ENCODE measurements at regions of chr9 and their contacts with region 1.

Region 1: DNA sequence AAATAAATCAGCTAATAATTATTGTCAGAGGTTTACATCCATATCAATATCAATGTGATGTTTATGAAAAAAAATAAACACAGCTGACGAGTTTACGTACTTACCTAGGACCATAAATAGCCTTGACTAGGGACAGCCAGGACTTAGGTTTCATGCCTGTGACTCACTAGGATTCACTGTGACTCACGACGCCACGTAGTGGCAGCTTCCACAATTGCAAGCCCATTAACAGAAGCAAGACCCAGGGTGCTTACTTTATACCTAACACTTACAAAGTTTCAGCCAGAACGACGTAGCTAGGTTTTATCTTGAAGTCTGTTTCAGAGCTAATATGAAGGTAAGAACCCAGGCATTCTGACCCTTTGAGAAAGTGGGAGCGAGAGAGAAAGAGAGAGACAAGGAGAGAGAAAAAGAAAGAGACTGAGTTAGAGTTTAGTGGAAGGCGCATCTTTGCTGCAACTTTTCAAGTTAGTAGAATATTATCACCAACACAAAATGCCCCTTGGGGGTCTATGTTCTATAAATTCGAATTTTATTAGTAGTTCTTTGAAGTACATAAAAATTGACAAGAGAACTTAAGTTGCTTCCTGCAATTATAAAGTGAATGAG is 191.2 kb downstream of the GNA14 start:
- DNase-seq: peak; percentile 78 to 82 (median 80)
- ATAC-seq: peak; percentile 92 to 96 (median 94)
- H3K4me3 ChIP-seq: no peak overlapping the region
- H3K27ac ChIP-seq: no peak overlapping the region
- H3K4me1 ChIP-seq: no peaks in the 10 kb centered on the region
- H3K27me3 ChIP-seq: no peaks in the 10 kb centered on the region
- CTCF ChIP-seq: peak; percentile 80 to 97 (median 92)
- POLR2A ChIP-seq: no peak

Region 2: GRCh38 chr9:77562019-77562748 is 105.3 kb after region 1 on chr9:
- intact Hi-C with region 1: no loop called
- DNase-seq: no peak
- ATAC-seq: no peak
- H3K4me3 ChIP-seq: no peak overlapping the region
- H3K27ac ChIP-seq: no peak overlapping the region
- H3K4me1 ChIP-seq: no peaks in the 10 kb centered on the region
- H3K27me3 ChIP-seq: no peaks in the 10 kb centered on the region
- CTCF ChIP-seq: no peak
- POLR2A ChIP-seq: no peak

Region 3: GRCh38 chr9:77648234-77649120 is 191.5 kb after region 1 on chr9 and contains the start of gene GNA14:
- intact Hi-C with region 1: loop called in 1 of 2 experiments (anchors 10 kb)
- DNase-seq: peak; percentile 76 to 85 (median 80)
- ATAC-seq: peak; percentile 81 to 88 (median 83)
- H3K4me3 ChIP-seq: peak within 1 kb of the TSS; percentile 51 to 61 (median 51)
- H3K27ac ChIP-seq: peak within 1 kb of the TSS; percentile 41 to 55 (median 43)
- H3K4me1 ChIP-seq: peaks cover 0 to 13% (median 2%) of the 10 kb centered on the region in 4 donors
- H3K27me3 ChIP-seq: no peaks in the 10 kb centered on the region
- CTCF ChIP-seq: no peak
- POLR2A ChIP-seq: no peak
- total RNA-seq, gene GNA14: 2.3 to 4.2 (median 3.8) TPM

Region 4: DNA sequence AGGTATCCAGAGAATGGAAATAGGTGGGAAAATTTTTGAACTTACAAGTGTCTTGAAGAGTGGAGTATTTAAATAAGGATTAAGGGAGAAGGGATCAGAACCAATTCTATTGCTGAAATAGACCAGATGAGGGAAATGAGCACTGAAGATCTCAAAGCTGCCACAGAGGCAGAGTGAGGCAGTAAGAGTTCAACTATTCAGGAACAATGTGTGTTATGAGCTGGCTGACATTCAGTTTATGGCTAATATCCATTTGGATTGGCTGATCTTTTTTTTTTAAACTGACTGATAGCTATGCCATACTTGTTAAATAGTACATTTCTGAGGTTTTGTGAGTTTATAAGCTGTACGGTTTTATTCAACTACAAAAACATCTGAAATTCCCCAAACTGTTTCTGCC is 286.5 kb after region 1 on chr9:
- intact Hi-C with region 1: loop called in 1 of 2 experiments (anchors 10 kb)
- DNase-seq: no peak
- ATAC-seq: no peak
- H3K4me3 ChIP-seq: no peak overlapping the region
- H3K27ac ChIP-seq: no peak overlapping the region
- H3K4me1 ChIP-seq: no peaks in the 10 kb centered on the region
- H3K27me3 ChIP-seq: no peaks in the 10 kb centered on the region
- CTCF ChIP-seq: no peak
- POLR2A ChIP-seq: no peak

Measured in right lobe of liver (tissue), 6 donors.